ENCODE measurements at regions of chr11 and their contacts with region 1.

Region 1: GRCh38 chr11:19561011-19561410 is 151.6 kb upstream of the NAV2 start:
- DNase-seq: no peak

Region 2: DNA sequence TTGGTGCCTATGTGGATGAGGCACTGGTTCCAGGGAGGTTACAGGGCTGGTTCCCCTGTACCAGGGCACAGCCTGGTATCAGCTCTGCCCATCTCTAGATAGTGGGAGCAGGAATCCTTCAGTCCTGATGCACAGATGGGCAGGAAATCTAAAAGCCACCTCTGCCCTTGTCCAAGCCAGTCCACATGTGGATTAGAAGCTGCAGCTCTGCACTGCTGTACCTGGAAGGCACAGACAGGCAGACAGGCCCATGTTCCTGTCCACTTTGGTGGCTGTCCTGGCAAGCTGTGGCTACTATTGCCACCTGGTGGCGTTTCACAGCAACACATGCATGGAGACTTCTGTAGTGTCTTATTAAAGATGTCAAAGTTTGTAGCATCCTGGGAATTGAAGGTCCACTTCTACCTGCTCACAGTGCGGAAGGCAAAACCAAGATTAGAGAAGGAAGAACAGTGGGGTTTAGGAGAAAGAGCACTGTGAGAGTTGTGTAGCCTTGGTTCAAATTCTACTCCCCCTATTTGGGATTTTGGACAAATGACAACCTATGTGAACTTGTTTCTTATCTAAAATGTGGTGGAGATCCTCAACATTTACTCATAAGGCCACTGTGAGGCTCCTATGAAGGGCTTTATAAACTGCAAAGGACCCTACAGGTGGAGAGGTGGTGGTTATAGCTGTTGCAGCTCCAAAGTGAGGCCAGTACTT is 181.7 kb after region 1 on chr11:
- intact Hi-C with region 1: loop called (anchors 1 kb)
- DNase-seq: peak; percentile 86

Region 3: GRCh38 chr11:19800162-19800561 is 239.2 kb after region 1 on chr11:
- intact Hi-C with region 1: loop called (anchors 5 kb)
- DNase-seq: no peak

Region 4: DNA sequence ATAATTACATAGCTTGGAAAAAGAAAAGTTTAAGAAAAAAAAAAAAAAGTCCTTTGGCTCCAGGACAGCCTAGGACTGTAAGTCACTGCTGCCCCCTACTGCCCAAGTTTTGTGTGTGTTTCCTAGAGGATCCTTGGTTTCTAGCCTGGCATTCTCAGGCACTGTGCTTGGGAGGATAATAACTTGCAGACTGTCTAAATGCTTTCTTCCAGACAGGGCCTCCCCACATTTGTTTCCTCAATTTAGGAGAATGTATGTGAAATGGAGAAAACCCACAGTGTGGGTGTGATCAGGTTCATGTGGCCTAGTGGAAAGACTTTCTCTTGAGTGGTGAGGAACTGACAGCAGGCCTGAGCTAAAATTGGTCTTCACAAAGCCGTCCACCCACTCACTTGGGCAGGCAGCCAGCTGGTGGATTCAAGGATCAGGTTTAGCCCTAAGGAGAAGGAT is 342.6 kb after region 1 on chr11:
- intact Hi-C with region 1: loop called (anchors 1 kb)
- DNase-seq: no peak

Region 5: GRCh38 chr11:20110908-20111669 is 550.1 kb after region 1 on chr11:
- intact Hi-C with region 1: loop called (anchors 10 kb)
- DNase-seq: no peak